AG04450 (cell line): ENCODE measurements at regions of chr2 and their contacts with region 1.

Region 1: GRCh38 chr2:74876081-74876886 is 42.4 kb downstream of the HK2 start:
- DNase-seq: no peak
- H3K4me3 ChIP-seq: no peak overlapping the region
- H3K27ac ChIP-seq: no peak overlapping the region
- H3K27me3 ChIP-seq: no peaks in the 10 kb centered on the region
- CTCF ChIP-seq: peak; percentile 62

Region 2: GRCh38 chr2:74553892-74554645 is 322.2 kb before region 1 on chr2 and contains the start of gene LOXL3:
- CTCF ChIA-PET with region 1: interaction called, 10 read pairs
- POLR2A ChIA-PET with region 1: no interaction called
- DNase-seq: peak; percentile 83
- H3K4me3 ChIP-seq: peak within 1 kb of the TSS; percentile 97
- H3K27ac ChIP-seq: peak within 1 kb of the TSS; percentile 91
- H3K27me3 ChIP-seq: no peaks in the 10 kb centered on the region
- CTCF ChIP-seq: no peak
- polyA plus RNA-seq, gene LOXL3: 41.1 and 46.2 TPM in 2 replicates

Region 3: GRCh38 chr2:74696829-74697228 is 179.5 kb before region 1 on chr2:
- CTCF ChIA-PET with region 1: interaction called, 148 read pairs
- POLR2A ChIA-PET with region 1: no interaction called
- DNase-seq: peak; percentile 72
- H3K4me3 ChIP-seq: no peak overlapping the region
- H3K27ac ChIP-seq: peak overlapping the region; percentile 57
- H3K27me3 ChIP-seq: peaks cover 3% of the 10 kb centered on the region
- CTCF ChIP-seq: no peak

Region 4: GRCh38 chr2:74708883-74709282 is 167.4 kb before region 1 on chr2:
- CTCF ChIA-PET with region 1: interaction called, 109 read pairs
- POLR2A ChIA-PET with region 1: no interaction called
- DNase-seq: peak; percentile 38
- H3K4me3 ChIP-seq: no peak overlapping the region
- H3K27ac ChIP-seq: no peak overlapping the region
- H3K27me3 ChIP-seq: no peaks in the 10 kb centered on the region
- CTCF ChIP-seq: no peak

Region 5: GRCh38 chr2:74730530-74730929 is 145.8 kb before region 1 on chr2:
- CTCF ChIA-PET with region 1: interaction called, 10 read pairs
- POLR2A ChIA-PET with region 1: no interaction called
- DNase-seq: no peak
- H3K4me3 ChIP-seq: no peak overlapping the region
- H3K27ac ChIP-seq: no peak overlapping the region
- H3K27me3 ChIP-seq: no peaks in the 10 kb centered on the region
- CTCF ChIP-seq: no peak

Region 6: DNA sequence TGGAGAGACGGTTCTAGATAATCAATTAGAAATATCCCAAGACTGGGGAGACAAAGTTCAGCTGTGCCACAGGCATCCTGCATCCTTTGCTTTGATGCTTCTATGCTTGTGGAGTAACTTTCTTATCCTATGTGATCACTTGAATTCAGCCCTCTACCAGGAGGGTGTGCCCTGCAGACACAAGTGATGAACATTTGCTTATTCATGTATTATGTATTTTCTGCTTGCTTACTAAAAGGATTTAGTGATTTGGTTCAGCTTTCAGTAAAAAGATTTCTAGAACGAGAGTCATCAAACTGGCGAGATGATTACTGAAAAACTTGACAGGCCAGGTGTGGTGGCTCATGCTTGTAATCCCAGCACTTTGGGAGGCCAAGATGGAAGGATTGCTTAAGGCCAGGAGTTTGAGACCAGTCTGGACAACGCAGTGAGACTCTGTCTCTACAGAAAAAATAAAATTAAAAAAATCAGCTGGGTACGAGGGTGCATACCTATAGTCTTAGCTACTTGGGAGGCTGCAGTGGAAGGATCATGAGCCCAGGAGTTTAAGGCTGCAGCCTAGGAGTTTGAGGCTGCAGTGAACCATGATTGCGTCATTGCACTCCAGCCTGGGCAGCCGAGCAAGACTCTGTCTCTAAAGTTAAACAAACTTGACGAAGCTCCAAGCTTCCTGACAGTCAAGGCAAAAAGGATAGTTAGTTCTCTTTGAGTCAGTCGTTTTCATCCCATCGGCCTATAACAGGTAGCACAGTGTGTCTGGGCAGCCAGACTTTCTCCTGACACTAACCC is 29.0 kb before region 1 on chr2:
- CTCF ChIA-PET with region 1: interaction called, 11 read pairs
- POLR2A ChIA-PET with region 1: no interaction called
- DNase-seq: no peak
- H3K4me3 ChIP-seq: no peak overlapping the region
- H3K27ac ChIP-seq: peak overlapping the region; percentile 39
- H3K27me3 ChIP-seq: no peaks in the 10 kb centered on the region
- CTCF ChIP-seq: no peak

Region 7: DNA sequence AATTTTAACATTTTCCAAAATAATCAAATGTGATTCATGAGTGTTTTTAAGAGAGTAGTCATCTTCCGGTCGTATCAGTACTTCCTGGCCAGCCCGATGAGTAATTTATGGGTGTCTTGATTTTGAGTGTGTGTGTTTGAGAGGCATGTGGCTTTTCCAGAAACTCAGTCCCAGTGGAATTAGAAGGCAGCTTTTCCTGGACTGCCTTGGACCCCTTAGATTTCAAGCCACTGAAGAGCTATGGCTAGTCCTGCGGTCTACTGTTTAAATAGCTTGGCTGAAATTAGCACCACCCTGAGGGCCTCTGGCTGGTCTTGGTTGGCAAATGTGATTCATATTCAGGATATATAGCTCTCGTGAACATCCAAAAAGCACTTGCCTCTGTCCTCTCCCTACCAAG is 17.0 kb after region 1 on chr2:
- CTCF ChIA-PET with region 1: interaction called, 11 read pairs
- POLR2A ChIA-PET with region 1: no interaction called
- DNase-seq: no peak
- H3K4me3 ChIP-seq: no peak overlapping the region
- H3K27ac ChIP-seq: peak overlapping the region; percentile 71
- H3K27me3 ChIP-seq: no peaks in the 10 kb centered on the region
- CTCF ChIP-seq: no peak